Right lobe of liver (tissue), 6 donors: ENCODE measurements at regions of chr1 and their contacts with region 1.

Region 1: GRCh38 chr1:154263465-154264332 is 8.7 kb upstream of the HAX1 start:
- DNase-seq: no peak
- ATAC-seq: no peak
- H3K4me3 ChIP-seq: no peak overlapping the region
- H3K27ac ChIP-seq: no peak overlapping the region
- H3K4me1 ChIP-seq: no peaks in the 10 kb centered on the region
- H3K27me3 ChIP-seq: no peaks in the 10 kb centered on the region
- CTCF ChIP-seq: no peak
- POLR2A ChIP-seq: no peak

Region 2: DNA sequence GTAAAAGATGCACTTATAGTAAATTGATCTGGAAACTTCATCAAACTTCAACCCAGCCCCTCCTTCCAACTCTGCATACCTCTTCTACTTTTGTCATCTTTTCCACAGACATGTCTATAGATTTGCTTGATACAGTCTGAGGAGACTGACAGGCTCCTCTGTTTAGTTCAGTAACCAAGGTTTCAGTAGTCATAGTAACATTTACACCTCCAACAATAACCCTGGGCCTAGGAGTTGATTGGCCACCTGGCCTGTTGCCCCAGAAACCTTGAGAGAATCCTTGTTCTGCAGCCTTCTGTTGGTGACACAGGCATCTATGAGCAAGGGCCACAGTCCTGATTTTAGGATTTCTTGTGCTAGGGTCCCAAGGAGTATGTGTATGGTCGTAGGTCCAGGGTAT is 57.5 kb before region 1 on chr1 and contains the start of gene CFAP141:
- intact Hi-C with region 1: loop called in 1 of 2 experiments (anchors 10 kb)
- DNase-seq: no peak
- ATAC-seq: no peak
- H3K4me3 ChIP-seq: no peak within 1 kb of the TSS
- H3K27ac ChIP-seq: no peak within 1 kb of the TSS
- H3K4me1 ChIP-seq: no peaks in the 10 kb centered on the region
- H3K27me3 ChIP-seq: no peaks in the 10 kb centered on the region
- CTCF ChIP-seq: no peak
- POLR2A ChIP-seq: no peak
- total RNA-seq, gene CFAP141: not detected